Cardiac septum (tissue), 1 donor: ENCODE measurements at regions of chr5 and their contacts with region 1.

Region 1: DNA sequence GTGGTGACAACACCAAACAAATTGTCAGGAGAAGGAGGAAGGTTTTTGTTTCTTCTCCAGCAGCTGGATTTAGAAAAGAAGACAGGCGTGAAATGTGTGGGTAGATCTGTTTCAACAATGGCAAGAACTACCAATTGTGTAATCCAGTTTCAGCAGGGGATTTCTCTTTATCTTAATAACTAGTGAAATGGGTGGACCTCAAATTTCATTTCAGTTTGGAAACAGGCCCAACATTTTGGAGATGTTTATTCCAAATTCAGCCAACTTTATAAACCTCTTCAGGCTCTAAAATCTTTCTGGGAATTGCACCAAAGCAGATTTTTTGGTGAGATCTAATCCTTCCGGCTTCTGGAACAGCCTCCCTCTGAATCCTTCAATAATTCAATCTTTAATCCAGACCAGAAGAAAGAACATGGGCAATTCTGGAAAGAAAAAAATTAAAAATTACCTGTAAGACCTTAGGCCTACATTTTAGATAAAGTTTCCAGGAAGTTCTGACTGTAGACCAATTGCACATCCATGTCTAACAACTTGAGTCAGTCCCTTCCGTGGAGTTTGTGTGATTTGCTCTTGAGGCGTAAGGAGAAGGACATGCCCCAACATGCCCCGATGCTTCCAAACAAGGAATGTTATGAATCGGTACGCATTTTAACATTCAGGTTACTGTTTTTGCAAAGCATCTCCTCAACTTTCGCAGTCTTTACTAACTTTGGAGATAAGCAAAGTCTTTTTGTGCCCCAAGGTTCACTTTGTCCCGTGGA is 423.6 kb downstream of the IRX1 start:
- DNase-seq: no peak

Region 2: DNA sequence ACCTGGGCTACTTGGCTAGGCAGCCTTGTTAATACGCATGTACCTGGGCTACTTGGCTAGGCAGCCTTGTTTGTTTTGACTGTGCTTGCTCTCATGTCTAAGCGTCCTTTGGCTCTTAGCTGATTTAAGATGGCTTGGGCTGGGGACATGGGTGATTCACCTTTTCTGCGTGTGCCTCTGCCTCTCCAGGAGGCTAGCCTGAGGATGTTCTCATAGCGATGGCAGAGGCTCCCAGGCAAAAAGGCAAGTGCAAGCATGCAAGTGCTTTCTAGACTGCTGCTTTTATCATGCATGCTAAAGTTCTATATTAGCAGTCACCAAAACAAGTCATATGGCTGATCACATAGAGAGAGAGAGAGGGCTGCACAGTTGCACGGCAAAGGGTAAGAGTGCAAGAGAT is 123.1 kb before region 1 on chr5:
- intact Hi-C with region 1: no loop called
- DNase-seq: no peak

Region 3: DNA sequence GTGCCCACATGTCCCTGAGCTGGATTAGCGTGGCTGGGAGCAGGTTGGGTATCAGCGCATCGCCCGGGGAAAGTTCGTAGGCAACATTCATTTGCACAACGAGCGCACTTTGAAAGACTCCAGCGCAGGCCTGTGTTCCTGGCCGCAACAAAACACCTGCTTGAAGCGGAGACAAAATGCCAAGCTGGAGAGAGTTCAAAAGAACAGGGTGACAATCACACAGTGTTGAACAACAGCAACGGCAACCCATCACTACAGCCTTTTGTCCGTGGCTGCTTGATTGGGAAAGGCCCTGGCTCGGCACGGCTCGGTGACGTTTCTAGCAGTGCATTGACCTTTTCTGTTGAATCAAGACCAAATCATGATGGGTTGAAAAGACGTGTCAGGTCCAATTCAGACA is 87.2 kb before region 1 on chr5:
- intact Hi-C with region 1: no loop called
- DNase-seq: no peak

Region 4: DNA sequence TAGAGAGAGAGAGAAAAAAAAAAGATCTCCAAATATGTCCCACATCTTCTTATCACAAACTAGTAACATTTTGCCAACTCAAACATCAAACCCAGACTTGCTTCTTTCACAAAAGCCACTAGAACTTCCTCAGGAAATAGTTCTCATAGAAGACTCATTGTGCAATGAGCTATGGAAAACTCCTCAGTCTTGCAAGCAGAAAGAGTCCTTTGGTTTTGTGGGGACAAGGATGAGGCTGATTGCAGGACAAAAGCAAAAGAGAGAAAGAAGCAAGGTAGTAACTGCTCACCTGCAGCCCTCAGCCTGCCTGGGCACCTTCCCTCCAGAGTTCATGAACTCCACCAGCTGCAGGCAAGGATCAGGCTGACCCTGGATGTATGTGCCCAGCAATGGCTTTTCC is 24.6 kb before region 1 on chr5:
- intact Hi-C with region 1: loop called (anchors 2 kb)
- DNase-seq: no peak

Region 5: DNA sequence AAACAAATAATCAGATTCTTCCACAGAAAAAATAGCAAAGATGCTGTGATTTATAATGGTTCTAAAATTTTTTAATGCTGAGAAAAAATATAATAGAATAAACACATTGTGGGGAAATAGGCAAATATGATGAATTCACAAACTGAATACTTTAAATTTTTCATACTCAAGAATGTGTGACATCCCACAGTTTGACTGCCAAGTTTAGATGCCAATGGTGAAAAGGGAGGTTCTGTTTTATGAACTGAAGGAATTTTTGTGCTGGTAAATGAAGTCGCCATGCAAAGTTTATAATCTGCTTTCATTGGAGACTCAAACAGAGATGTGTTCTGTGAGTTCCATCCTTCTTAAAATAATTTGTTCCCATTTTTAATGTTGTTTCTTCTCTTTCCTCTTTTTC is 753.4 kb after region 1 on chr5:
- intact Hi-C with region 1: no loop called
- DNase-seq: no peak